ENCODE measurements at regions of chr11 and their contacts with region 1.

Region 1: GRCh38 chr11:5684646-5685362 is at the start of gene TRIM5:
- DNase-seq: peak; percentile 21
- H3K4me3 ChIP-seq: peak within 1 kb of the TSS; percentile 36 to 66 (median 50)
- H3K27ac ChIP-seq: peak within 1 kb of the TSS; percentile 86 to 96 (median 94)
- H3K4me1 ChIP-seq: peaks cover 17 to 44% (median 19%) of the 10 kb centered on the region in 3 donors
- H3K27me3 ChIP-seq: no peaks in the 10 kb centered on the region
- CTCF ChIP-seq: peak; percentile 12 to 71 (median 62)
- POLR2A ChIP-seq: peak in 1 of 4 donors; percentile 48
- total RNA-seq, gene TRIM5: 12.6 to 15.7 (median 14.9) TPM

Region 2: DNA sequence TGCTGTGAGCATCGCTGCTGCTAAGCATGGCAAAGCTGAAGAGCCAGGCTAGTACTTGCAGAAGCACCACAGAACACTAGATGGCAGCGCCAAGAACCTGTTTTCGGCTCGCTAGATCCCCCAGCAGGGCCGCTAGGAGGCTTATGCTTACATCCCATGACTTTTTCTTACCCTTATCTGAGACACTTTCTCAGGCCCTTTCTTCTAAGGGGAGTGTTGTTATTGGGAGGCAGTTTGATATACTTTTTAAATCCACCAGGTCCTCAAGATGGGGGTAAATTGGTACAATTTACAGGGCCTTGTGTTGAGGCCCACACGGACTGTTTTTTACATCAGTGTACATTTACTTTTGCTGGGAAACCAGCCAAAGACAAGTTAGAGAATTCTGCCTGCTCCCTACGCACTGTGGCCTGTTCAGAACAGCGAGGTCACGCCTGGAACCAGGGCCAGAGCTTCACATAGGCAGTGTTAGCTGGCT is 84.4 kb before region 1 on chr11:
- intact Hi-C with region 1: loop called (anchors 5 kb)
- DNase-seq: no peak
- H3K4me3 ChIP-seq: no peak overlapping the region
- H3K27ac ChIP-seq: peak overlapping the region in 3 of 4 donors; percentile 59 to 67 (median 64)
- H3K4me1 ChIP-seq: peaks cover 4 to 43% (median 22%) of the 10 kb centered on the region in 3 donors
- H3K27me3 ChIP-seq: no peaks in the 10 kb centered on the region
- CTCF ChIP-seq: peak in 5 of 6 experiments; percentile 46 to 82 (median 66)
- POLR2A ChIP-seq: no peak